Ovary (tissue), 10 donors: ENCODE measurements at regions of chr1 and their contacts with region 1.

Region 1: DNA sequence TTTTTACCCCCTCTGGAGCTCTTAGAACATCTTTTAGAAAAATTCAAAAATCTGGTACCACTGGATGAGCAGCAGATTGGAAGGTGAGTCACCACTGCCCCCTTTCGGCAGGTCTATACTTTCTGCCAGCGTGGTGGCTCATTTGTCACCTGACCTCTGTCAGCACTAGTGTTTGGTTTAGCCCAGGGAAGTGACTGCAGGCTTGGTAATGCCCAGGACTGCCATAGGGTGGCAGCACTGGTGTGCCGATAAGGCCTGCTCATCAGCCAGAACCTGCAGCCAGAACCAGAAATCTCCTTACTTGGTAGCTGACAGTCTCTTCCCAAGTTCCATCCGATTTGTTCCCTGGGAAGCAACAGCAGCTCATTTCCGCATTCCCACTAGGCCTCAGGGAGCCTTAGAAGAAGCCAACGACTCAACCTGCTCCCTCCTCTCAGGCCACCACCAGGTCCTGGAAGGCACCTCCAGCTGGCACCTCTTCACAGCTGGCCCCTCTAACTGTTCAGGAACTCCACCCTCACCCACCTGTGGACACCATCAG is 6.8 kb downstream of the SMIM12 start:
- DNase-seq: peak; percentile 64 to 85 (median 76)
- H3K4me3 ChIP-seq: no peak overlapping the region
- H3K27ac ChIP-seq: peak overlapping the region in 1 of 2 donors; percentile 11
- H3K4me1 ChIP-seq: no peaks in the 10 kb centered on the region
- H3K27me3 ChIP-seq: no peaks in the 10 kb centered on the region
- CTCF ChIP-seq: peak; percentile 58 to 81 (median 59)
- EP300 ChIP-seq: no peak
- POLR2A ChIP-seq: no peak

Region 2: DNA sequence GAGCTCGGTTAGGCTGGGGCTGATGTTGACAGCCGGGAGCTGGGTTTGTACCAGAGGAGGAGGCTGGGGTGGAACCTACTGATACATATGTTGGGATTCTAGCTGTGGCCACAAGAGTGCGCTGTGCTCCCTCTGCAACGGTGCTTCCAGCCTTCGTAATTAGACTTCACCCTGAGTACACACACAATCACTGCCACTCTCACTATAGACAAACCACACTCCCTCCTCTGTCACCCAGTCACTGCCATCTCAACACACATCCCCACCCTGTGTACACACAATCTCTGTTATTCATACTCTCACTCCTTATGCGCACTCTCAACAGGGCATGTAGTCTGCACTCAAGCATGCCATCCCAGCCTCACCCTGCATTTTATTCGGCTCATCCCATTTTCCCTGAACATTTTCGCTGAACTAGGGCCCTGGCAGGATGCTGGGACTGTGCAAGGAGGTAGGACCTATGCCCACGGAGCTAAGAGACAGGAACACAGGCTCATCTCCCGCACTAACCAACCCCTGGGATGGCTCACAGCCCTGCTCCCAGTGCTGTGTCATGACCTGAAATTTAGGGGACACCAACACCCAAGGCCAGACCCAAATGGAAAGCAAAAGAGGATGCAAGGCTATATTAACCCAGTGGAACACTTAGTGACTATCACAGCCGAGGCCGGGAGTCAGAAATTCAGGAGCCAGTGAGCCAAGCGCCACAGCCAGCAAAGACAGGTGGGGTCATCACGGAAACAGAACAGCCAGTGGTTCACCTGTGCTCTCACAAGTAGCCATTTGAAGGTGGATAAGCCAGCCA is 66.0 kb before region 1 on chr1:
- intact Hi-C with region 1: loop called in 2 of 4 experiments (anchors 5 kb)
- DNase-seq: peak; percentile 43 to 73 (median 53)
- H3K4me3 ChIP-seq: no peak overlapping the region
- H3K27ac ChIP-seq: no peak overlapping the region
- H3K4me1 ChIP-seq: no peaks in the 10 kb centered on the region
- H3K27me3 ChIP-seq: no peaks in the 10 kb centered on the region
- CTCF ChIP-seq: peak; percentile 21 to 51 (median 42)
- EP300 ChIP-seq: no peak
- POLR2A ChIP-seq: no peak

Region 3: DNA sequence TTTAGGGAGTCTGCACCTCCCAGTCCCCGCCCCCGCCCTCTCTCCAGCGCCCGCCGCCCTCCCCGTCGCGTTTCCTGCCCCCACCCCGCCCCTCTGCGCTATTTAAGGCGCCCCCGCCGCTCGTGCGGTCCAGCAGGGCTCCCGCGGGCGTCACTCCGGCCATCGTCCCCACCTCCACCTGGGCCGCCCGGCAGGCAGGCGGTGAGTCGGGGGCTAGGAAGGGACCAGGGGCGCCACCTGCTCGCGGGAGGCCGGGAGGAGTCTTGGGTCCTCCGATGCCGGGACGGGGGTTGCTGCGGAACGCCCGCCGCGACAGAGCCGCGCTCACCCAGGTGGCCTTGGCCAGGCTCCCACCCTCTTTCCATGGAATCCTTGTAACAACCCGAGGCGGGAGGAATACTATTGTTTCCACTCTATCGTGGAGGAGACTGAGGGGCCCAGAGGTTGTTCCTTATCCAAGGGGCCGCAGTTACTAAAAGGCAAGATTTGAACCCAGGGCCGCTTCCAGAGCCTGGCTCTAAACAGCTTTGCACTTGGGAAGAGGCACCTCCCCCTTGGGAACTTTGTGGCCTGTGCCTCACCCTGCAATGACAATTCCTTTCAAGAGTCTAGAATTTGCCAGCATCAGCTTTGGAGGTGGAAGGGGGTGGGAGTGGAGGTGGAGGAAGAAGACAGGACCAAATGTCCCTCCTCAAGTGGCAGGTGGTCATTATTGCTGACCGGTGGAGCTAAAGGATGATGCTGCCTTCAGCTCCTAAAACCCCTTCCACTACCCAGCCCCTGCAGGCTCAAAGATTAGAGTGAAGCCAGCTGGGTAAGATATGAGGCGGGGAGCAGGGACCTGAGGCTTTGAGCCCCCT is 59.6 kb before region 1 on chr1 and contains the start of gene GJA4:
- intact Hi-C with region 1: loop called in 2 of 4 experiments (anchors 5 kb)
- DNase-seq: no peak
- H3K4me3 ChIP-seq: peak within 1 kb of the TSS; percentile 26
- H3K27ac ChIP-seq: peak within 1 kb of the TSS; percentile 6 to 27
- H3K4me1 ChIP-seq: peaks cover 1% of the 10 kb centered on the region
- H3K27me3 ChIP-seq: no peaks in the 10 kb centered on the region
- CTCF ChIP-seq: no peak
- EP300 ChIP-seq: no peak
- POLR2A ChIP-seq: no peak
- total RNA-seq, gene GJA4: 4.9 to 149 (median 9.5) TPM